ENCODE measurements at regions of chr2 and their contacts with region 1.

Region 1: DNA sequence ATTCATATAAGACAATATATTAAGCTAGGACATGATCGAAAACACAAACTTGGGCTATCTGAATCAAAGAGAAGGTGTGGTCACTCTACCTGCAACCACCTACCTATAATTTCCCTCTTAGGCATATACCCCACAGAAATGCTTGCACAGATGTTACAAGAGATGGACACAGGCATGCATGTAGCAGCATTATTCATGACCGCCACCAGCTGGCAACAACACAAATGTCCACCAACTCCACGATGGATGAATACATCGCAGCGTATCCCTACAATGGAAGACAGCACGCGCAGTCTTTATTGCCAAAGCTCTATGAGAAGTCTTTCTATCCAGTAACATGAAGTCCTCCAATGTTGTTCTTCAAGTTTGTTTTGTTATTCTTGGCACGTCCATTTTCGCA is 90.8 kb downstream of the ARL4C start:
- DNase-seq: peak in 1 of 4 experiments; percentile 6
- ATAC-seq: peak; percentile 63; the same call in 2 of the 3 replicates
- H3K4me3 ChIP-seq: no peak overlapping the region
- H3K27ac ChIP-seq: no peak overlapping the region
- H3K4me1 ChIP-seq: no peaks in the 10 kb centered on the region
- H3K27me3 ChIP-seq: peaks cover 0 to 6% of the 10 kb centered on the region in 2 experiments; a peak in 1 of 5 replicates
- CTCF ChIP-seq: peak in 2 of 3 experiments; percentile 10 to 34; a peak in 2 of 6 replicates
- EP300 ChIP-seq: no peak
- POLR2A ChIP-seq: no peak
- RAD21 ChIP-seq: peak; percentile 40 to 57

Region 2: DNA sequence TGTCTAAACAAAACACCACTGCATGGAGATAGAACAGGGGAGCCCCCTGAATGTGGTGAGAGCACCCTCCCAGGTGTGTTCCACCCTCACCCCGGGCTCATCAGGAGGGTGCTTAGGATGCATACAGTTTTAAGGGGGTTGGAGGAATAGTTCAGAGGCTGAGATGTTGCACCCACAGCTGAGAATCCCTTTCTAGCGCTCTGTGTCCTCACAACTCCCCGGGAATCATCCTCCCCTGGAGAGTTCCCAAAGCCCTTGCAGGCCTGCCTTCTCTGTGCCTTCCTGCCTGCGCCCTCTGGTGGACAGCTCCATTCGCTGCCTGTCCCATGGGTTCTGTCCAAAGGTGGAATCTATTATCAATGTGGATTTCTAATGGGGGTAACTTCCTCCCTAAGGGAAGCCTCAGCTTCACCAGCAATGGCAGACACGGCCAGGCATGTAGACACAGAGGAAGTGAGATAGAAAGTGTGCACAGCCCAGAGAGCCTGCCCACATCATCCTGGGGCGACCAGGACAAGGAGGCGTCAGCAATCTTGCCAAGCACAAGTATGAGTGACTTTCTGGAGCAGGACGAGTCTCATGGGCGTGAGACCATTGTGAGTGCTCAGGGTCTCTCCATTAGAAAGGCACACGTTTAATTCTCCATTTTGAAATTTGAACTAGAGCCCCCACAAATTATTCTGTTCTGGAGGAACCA is 694.6 kb before region 1 on chr2:
- CTCF ChIA-PET with region 1: no interaction called
- POLR2A ChIA-PET with region 1: no interaction called
- in situ Hi-C with region 1: no loop called
- intact Hi-C with region 1: no loop called
- DNase-seq: peak; percentile 30 to 68 (median 37)
- ATAC-seq: peak; percentile 93
- H3K4me3 ChIP-seq: no peak overlapping the region
- H3K27ac ChIP-seq: no peak overlapping the region
- H3K4me1 ChIP-seq: 0 out of 5 replicates have a peak, but pooled peaks cover 0 to 3% of the 10 kb centered on the region in 2 experiments
- H3K27me3 ChIP-seq: peaks cover 0 to 10% of the 10 kb centered on the region in 2 experiments; a peak in 3 of 5 replicates
- CTCF ChIP-seq: peak; percentile 73 to 76 (median 73)
- EP300 ChIP-seq: no peak
- POLR2A ChIP-seq: no peak
- RAD21 ChIP-seq: peak; percentile 72 to 76

Region 3: DNA sequence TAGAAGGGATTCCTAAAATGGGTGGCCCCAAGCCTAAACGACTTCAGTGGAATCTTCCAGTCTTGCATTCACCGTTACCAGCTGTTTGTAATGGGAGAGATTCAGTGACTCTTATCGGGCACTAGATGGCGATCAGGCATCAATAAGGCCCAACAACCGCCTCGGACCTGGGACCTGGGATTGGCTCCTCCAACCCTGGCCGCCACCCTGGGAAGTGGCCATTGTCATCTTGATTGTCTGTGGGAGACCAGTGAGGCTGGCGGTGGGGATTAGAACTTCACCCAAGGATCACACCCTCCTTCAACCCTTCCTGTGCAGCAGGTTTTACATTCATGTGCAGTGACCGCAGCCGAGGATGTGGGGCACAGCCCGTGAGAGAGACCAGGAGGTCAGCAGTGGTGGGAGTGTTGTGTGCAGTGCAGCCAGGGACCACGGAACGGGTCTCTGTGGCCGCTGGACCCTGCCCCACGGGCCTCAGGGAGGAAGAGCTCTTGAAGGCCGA is 270.3 kb before region 1 on chr2:
- CTCF ChIA-PET with region 1: no interaction called
- POLR2A ChIA-PET with region 1: no interaction called
- in situ Hi-C with region 1: no loop called
- intact Hi-C with region 1: loop called (anchors 5 kb)
- DNase-seq: peak; percentile 36 to 53 (median 42)
- ATAC-seq: peak; percentile 82
- H3K4me3 ChIP-seq: no peak overlapping the region
- H3K27ac ChIP-seq: no peak overlapping the region
- H3K4me1 ChIP-seq: no peaks in the 10 kb centered on the region; a peak in 1 of 5 replicates
- H3K27me3 ChIP-seq: peaks cover 0 to 9% of the 10 kb centered on the region in 2 experiments; a peak in 1 of 5 replicates
- CTCF ChIP-seq: peak; percentile 45 to 57 (median 54)
- EP300 ChIP-seq: no peak
- POLR2A ChIP-seq: no peak
- RAD21 ChIP-seq: peak; percentile 48 to 59

Region 4: GRCh38 chr2:234288974-234289455 is 117.1 kb before region 1 on chr2:
- CTCF ChIA-PET with region 1: no interaction called
- POLR2A ChIA-PET with region 1: no interaction called
- in situ Hi-C with region 1: no loop called
- intact Hi-C with region 1: loop called (anchors 5 kb)
- DNase-seq: peak; percentile 48 to 68 (median 64)
- ATAC-seq: peak; percentile 86
- H3K4me3 ChIP-seq: no peak overlapping the region
- H3K27ac ChIP-seq: no peak overlapping the region
- H3K4me1 ChIP-seq: no peaks in the 10 kb centered on the region; a peak in 1 of 5 replicates
- H3K27me3 ChIP-seq: no peaks in the 10 kb centered on the region
- CTCF ChIP-seq: peak; percentile 62 to 71 (median 66)
- EP300 ChIP-seq: no peak
- POLR2A ChIP-seq: no peak
- RAD21 ChIP-seq: peak; percentile 54 to 55

Region 5: GRCh38 chr2:234500394-234501006 is 94.4 kb after region 1 on chr2:
- CTCF ChIA-PET with region 1: no interaction called
- POLR2A ChIA-PET with region 1: no interaction called
- in situ Hi-C with region 1: no loop called
- intact Hi-C with region 1: no loop called
- DNase-seq: peak in 2 of 4 experiments; percentile 15 to 23
- ATAC-seq: peak; percentile 65
- H3K4me3 ChIP-seq: no peak overlapping the region
- H3K27ac ChIP-seq: no peak overlapping the region
- H3K4me1 ChIP-seq: peaks cover 0 to 19% of the 10 kb centered on the region in 2 experiments; a peak in 2 of 5 replicates
- H3K27me3 ChIP-seq: peaks cover 0 to 13% of the 10 kb centered on the region in 2 experiments; a peak in 3 of 5 replicates
- CTCF ChIP-seq: peak; percentile 34 to 56 (median 35); a peak in 4 of 6 replicates
- EP300 ChIP-seq: no peak
- POLR2A ChIP-seq: no peak
- RAD21 ChIP-seq: peak; percentile 62